ENCODE measurements at regions of chr2 and their contacts with region 1.

Region 1: GRCh38 chr2:41840702-41841551 is 206.9 kb upstream of the PKDCC start:
- DNase-seq: peak; percentile 73
- H3K4me3 ChIP-seq: peak overlapping the region; percentile 78
- CTCF ChIP-seq: peak; percentile 98

Region 2: GRCh38 chr2:41829011-41829500 is 11.9 kb before region 1 on chr2:
- CTCF ChIA-PET with region 1: interaction called, 11 read pairs
- POLR2A ChIA-PET with region 1: no interaction called
- DNase-seq: no peak
- H3K4me3 ChIP-seq: no peak overlapping the region
- CTCF ChIP-seq: no peak